ENCODE measurements at regions of chr4 and their contacts with region 1.

Region 1: DNA sequence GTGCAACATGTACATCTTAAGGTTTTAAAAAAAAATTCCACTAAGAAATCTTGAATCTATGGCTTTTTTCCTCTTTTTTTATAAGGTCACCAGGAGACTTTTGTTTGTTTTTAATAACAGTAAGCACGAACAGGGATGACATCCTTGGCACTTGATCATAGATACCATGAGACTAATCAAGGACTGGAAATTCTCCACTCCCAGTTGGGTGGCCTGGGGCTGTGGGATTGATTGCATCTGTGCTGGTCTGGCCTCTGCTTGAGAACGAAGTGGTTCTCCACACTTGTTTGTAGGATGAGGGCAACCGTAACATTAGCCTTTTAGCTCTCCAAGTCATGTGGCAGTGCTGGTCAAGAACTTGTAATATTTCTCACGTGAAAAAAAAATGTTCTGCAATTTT is 35.4 kb downstream of the SNX25 start:
- DNase-seq: no peak
- H3K4me3 ChIP-seq: no peak overlapping the region
- H3K27ac ChIP-seq: no peak overlapping the region
- H3K4me1 ChIP-seq: no peaks in the 10 kb centered on the region
- H3K27me3 ChIP-seq: no peaks in the 10 kb centered on the region
- CTCF ChIP-seq: no peak
- POLR2A ChIP-seq: no peak

Region 2: DNA sequence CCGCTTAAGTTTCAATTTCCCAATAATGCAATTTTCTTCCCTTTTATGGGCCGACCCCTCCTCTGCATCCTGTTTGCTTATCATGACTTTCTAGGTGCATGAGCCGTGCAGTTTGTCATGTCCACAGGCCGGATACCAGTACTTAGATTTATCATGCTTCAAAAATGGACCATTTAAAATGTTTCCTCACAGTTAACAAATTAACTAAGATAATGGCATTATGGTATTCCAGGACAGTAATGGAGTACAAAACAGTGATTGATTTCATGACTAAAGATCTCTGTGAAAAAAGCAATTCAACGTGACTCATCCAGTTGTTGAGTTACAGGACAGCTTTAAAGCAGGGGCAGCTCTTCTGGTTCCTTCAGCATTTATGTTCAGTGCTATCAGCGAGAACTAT is 12.4 kb before region 1 on chr4:
- CTCF ChIA-PET with region 1: interaction called, 3 read pairs
- POLR2A ChIA-PET with region 1: no interaction called
- dilution Hi-C with region 1: no loop called
- intact Hi-C with region 1: loop called (anchors 2 kb)
- DNase-seq: no peak
- H3K4me3 ChIP-seq: no peak overlapping the region
- H3K27ac ChIP-seq: no peak overlapping the region
- H3K4me1 ChIP-seq: peaks cover 3% of the 10 kb centered on the region
- H3K27me3 ChIP-seq: no peaks in the 10 kb centered on the region
- CTCF ChIP-seq: no peak
- POLR2A ChIP-seq: no peak

Region 3: DNA sequence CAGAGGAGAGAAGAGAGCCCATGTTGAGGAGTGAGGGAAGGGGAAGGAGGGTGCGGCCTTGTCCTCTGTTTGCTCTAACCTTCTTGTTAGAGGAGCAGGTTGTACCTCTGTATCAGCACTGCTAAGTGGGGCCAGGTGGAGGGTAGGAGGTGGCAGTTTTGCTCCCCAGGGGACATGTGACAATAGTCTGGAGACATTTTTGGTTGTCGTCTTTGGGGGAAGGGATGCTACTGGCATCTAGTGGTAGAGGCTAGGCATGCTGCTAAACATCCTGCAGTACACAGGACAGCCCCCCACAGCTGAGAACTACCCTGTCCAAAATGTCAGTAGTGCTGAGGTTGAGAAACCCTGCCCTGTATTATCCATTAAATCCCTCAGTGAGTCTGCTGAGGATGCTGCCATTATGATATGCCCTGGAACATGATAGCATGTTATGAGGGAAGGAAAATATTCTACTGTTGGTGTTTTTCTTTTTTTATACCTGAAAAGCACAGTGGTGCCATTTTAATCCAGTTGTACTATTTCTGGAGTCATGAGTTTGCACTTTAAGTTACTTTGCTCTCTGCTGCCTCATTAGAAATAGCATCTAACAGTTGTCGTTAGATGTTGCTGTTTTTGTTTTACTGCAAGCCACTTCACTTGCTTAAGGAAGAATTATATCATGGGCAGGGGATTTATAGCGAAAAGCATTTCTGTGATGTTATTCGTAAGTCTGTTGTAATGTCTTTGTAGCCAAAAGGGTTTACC is 60.4 kb after region 1 on chr4:
- CTCF ChIA-PET with region 1: no interaction called
- POLR2A ChIA-PET with region 1: no interaction called
- dilution Hi-C with region 1: no loop called
- intact Hi-C with region 1: no loop called
- DNase-seq: peak; percentile 18
- H3K4me3 ChIP-seq: no peak overlapping the region
- H3K27ac ChIP-seq: no peak overlapping the region
- H3K4me1 ChIP-seq: no peaks in the 10 kb centered on the region
- H3K27me3 ChIP-seq: no peaks in the 10 kb centered on the region
- CTCF ChIP-seq: peak; percentile 16 to 22
- POLR2A ChIP-seq: no peak

Region 4: GRCh38 chr4:185536411-185536709 is 291.6 kb after region 1 on chr4:
- CTCF ChIA-PET with region 1: no interaction called
- POLR2A ChIA-PET with region 1: no interaction called
- dilution Hi-C with region 1: no loop called
- intact Hi-C with region 1: no loop called
- DNase-seq: no peak
- H3K4me3 ChIP-seq: no peak overlapping the region
- H3K27ac ChIP-seq: no peak overlapping the region
- H3K4me1 ChIP-seq: peaks cover 10% of the 10 kb centered on the region
- H3K27me3 ChIP-seq: peaks cover 0 to 6% of the 10 kb centered on the region in 2 experiments
- CTCF ChIP-seq: no peak
- POLR2A ChIP-seq: no peak

Measured in endothelial cell of umbilical vein (primary cell).